ENCODE measurements at regions of chr17 and their contacts with region 1.

Region 1: GRCh38 chr17:41648411-41649195 is 24.2 kb upstream of the KRT17 start:
- DNase-seq: peak; percentile 76
- H3K4me3 ChIP-seq: no peak overlapping the region
- H3K27ac ChIP-seq: peak overlapping the region; percentile 77
- H3K4me1 ChIP-seq: peaks cover 70% of the 10 kb centered on the region
- H3K27me3 ChIP-seq: no peaks in the 10 kb centered on the region
- CTCF ChIP-seq: peak; percentile 83 to 97

Region 2: DNA sequence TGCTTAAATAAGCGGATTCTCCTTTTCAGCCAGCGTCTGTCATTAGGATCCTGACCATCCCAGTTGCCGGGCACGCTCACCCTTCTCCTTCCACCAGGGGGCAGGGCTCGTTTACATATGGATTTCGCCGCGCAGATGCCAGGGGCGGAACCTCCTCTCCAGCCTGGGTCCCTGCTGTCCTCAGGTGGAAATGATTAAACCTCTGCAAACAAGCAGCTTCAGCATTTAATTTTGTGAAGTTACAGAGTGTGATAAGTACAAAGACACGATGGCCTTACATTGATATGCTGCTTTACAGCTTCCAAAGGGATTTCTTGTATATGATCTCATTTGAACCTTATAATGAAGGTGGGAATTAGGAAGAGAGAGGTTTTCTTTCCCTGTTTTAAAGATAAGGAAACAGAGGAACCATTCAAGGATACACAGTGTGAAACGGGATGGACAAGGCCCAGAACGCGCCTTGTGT is 845.0 kb before region 1 on chr17:
- CTCF ChIA-PET with region 1: no interaction called
- dilution Hi-C with region 1: no loop called
- in situ Hi-C with region 1: no loop called
- intact Hi-C with region 1: loop called (anchors 1 kb)
- DNase-seq: peak; percentile 65
- H3K4me3 ChIP-seq: no peak overlapping the region
- H3K27ac ChIP-seq: no peak overlapping the region
- H3K4me1 ChIP-seq: peaks cover 4% of the 10 kb centered on the region
- H3K27me3 ChIP-seq: no peaks in the 10 kb centered on the region
- CTCF ChIP-seq: peak; percentile 89 to 93

Region 3: GRCh38 chr17:41322094-41322902 is 326.3 kb before region 1 on chr17:
- CTCF ChIA-PET with region 1: no interaction called
- dilution Hi-C with region 1: no loop called
- in situ Hi-C with region 1: no loop called
- intact Hi-C with region 1: loop called (anchors 5 kb)
- DNase-seq: peak; percentile 61
- H3K4me3 ChIP-seq: no peak overlapping the region
- H3K27ac ChIP-seq: peak overlapping the region; percentile 39
- H3K4me1 ChIP-seq: peaks cover 3% of the 10 kb centered on the region
- H3K27me3 ChIP-seq: no peaks in the 10 kb centered on the region
- CTCF ChIP-seq: peak; percentile 95 to 98

Region 4: GRCh38 chr17:41496820-41497408 is 151.7 kb before region 1 on chr17:
- CTCF ChIA-PET with region 1: no interaction called
- dilution Hi-C with region 1: no loop called
- in situ Hi-C with region 1: no loop called
- intact Hi-C with region 1: loop called (anchors 5 kb)
- DNase-seq: peak; percentile 88
- H3K4me3 ChIP-seq: no peak overlapping the region
- H3K27ac ChIP-seq: peak overlapping the region; percentile 52
- H3K4me1 ChIP-seq: peaks cover 49% of the 10 kb centered on the region
- H3K27me3 ChIP-seq: no peaks in the 10 kb centered on the region
- CTCF ChIP-seq: peak; percentile 97

Region 5: DNA sequence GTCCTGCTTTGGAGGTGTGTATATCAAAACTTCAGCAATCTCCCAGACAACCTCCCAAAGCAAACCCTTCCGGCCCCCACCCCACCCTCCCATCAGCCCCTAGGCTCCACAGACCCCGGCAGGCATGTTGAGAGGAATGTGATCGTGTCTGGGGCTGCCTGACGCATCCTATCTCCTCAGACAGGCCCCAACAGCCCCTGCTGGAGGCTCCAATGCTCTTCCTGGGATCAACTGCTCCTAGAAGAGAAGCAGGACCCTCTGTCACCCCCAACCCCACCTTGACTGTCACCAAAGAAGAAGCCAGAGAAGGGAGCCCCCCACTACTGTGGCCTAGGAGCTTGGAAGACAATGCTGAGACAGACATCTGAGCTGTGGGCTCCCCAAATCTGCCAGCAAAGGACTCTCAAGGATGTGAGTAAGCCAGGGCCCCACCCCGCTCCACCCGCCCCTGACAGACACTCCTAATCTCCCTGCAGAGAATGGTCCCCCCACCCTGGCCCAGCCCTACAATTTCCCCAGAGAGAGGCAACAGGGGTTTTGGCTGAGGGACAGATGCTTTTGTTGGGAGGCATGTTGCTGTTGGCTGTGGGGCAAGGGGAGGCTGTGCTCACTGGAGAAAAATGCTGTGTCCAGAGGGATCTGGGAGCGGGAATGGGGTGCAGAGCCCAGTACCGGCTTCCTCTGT is 60.3 kb before region 1 on chr17:
- CTCF ChIA-PET with region 1: interaction called, 5 read pairs
- dilution Hi-C with region 1: loop called (anchors 5 kb)
- in situ Hi-C with region 1: no loop called
- intact Hi-C with region 1: no loop called
- DNase-seq: peak; percentile 69
- H3K4me3 ChIP-seq: no peak overlapping the region
- H3K27ac ChIP-seq: peak overlapping the region; percentile 82
- H3K4me1 ChIP-seq: peaks cover 29% of the 10 kb centered on the region
- H3K27me3 ChIP-seq: no peaks in the 10 kb centered on the region
- CTCF ChIP-seq: peak in 1 of 2 donors; percentile 19

Region 6: DNA sequence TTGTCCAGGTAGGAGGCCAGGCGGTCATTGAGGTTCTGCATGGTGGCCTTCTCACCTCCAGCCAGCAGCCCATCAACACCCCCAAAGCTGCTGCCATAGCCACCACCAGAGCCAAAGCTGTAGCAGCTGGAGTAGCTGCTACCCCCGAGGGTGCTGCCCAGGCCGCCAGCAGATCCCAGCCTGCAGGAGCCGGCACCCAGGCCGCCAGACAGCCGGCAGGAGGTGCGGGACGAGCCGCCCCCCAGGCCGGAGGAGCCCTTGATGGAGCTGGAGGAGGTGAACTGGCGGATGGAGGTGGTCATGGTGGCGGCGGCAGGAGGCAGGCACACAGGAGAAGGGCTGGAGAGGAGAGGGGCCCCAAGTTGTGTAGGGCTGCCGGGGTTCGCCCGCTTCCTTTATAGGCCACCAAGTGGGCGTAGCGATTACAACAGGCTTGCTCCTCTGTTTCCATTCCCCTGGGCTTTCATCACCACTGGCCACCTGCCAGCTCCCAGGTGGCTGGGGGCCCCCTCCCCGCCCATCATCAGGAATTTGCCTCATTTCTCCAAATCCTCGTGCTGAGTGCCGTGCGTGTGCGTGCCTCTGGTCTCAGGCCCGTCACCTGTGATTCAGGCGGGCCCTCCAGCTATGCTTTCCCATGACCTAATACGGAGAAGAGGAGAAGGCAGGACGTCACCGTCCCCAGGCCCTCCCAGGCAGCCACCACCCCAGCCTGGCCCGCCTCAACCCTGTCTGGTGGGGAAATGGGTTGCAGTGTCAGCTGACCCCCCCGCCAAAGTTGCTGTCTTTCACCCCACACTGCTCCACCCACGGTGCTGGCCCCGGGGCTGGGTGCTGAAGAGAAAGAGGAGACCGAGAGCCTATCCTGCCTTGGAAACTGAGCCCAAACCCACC is 24.1 kb before region 1 on chr17 and contains the start of gene KRT17:
- CTCF ChIA-PET with region 1: interaction called, 6 read pairs
- dilution Hi-C with region 1: loop called (anchors 5 kb)
- in situ Hi-C with region 1: no loop called
- intact Hi-C with region 1: loop called (anchors 1 kb)
- DNase-seq: peak; percentile 99
- H3K4me3 ChIP-seq: peak within 1 kb of the TSS; percentile 57 to 86 (median 70)
- H3K27ac ChIP-seq: peak within 1 kb of the TSS; percentile 98
- H3K4me1 ChIP-seq: peaks cover 63% of the 10 kb centered on the region
- H3K27me3 ChIP-seq: no peaks in the 10 kb centered on the region
- CTCF ChIP-seq: peak in 1 of 2 donors; percentile 19
- total RNA-seq, gene KRT17: 10,365 to 24,723 TPM

Region 7: DNA sequence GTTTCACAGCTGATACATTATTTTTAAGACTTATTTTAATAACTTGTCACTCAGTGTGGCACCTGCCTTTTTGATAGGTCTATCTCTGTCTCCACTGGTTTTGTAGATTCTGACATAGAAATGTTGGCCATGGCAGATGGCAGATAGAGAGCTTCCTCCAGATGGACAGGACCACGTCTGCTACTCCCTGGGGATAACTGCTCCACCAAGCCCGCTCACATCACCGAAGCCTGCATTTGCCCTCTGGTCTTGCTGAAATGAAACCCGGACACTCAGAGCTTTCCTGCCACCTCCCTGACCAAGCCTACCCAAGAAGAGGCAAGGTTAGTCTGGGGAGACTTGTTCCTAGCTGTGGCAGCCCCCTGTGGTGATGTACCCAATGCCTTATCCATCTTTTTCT is 102.3 kb after region 1 on chr17:
- CTCF ChIA-PET with region 1: no interaction called
- dilution Hi-C with region 1: no loop called
- in situ Hi-C with region 1: no loop called
- intact Hi-C with region 1: no loop called
- DNase-seq: no peak
- H3K4me3 ChIP-seq: no peak overlapping the region
- H3K27ac ChIP-seq: no peak overlapping the region
- H3K4me1 ChIP-seq: no peaks in the 10 kb centered on the region
- H3K27me3 ChIP-seq: no peaks in the 10 kb centered on the region
- CTCF ChIP-seq: no peak

Measured in mammary epithelial cell (primary cell).